PC-3 (cell line): ENCODE measurements at regions of chr3 and their contacts with region 1.

Region 1: DNA sequence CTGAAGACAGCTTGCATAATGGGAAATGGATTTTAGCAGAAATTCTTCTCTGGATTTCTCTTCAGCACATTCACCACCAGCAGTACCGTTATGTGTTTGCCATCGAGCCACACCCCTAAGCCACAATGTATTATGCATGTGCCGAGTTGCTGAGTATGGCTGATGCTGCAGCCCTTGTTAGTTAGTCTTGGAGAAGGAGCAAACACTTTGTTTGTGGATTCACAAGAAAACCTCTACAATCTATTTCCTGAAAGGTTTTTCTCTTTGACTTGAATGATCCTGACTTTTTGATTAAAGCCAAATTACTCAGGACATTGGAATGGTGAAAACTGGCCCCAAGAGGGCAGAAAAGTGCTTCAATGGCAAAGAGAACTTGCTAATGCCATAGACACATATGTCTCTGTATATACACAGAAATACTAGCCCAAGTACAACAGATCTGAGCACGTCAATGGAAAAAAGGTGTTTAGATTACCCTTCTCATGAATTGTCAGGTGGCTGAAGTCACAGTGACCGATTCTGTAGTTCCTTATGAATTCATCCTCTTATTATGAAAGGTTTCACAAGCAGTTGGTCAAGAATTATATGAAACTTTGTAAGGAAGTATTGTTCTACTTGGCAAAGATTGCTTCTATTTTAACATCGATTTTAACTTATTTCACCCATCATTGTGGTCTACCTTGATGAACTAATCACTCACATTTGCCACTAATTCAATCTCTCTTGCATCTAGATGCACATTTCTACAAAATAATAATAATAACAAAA is 103.0 kb downstream of the P3H2 start:
- DNase-seq: peak; percentile 90
- ATAC-seq: peak; percentile 74
- H3K4me3 ChIP-seq: peak overlapping the region; percentile 33; the same call in 1 of the 2 replicates
- H3K27ac ChIP-seq: no peak overlapping the region
- H3K4me1 ChIP-seq: peaks cover 28% of the 10 kb centered on the region
- H3K27me3 ChIP-seq: no peaks in the 10 kb centered on the region
- CTCF ChIP-seq: peak; percentile 86

Region 2: DNA sequence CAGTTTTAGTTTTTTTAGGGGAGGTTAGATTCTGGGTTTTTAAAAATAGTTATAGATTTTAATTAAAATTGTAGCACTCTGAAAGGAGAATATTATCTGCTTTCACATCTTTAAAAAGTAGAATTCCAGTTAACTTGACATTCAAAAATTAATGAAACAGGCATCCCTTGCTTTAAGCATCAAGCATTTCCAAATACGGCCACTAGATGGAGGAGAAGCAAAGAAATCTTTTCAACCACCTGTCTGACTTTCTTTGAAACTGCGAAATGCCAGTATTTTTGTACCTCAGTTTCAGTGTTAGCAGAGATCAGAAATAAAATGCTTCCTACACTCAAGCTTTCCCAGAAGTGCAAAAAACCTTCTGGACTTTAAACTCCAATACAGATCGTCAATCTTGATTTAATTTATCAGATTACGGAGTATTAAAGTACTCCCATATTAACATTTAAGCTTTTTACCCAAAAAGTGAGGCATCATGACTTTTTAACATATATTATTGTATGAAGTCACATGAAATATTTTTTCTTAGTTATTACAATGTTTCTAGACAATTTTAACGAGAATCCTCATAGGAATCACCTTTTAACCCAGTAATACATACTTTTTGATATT is 50.3 kb before region 1 on chr3:
- CTCF ChIA-PET with region 1: interaction called, 3 read pairs
- POLR2A ChIA-PET with region 1: no interaction called
- intact Hi-C with region 1: loop called (anchors 1 kb)
- DNase-seq: peak; percentile 85
- ATAC-seq: peak; percentile 58
- H3K4me3 ChIP-seq: no peak overlapping the region
- H3K27ac ChIP-seq: no peak overlapping the region
- H3K4me1 ChIP-seq: no peaks in the 10 kb centered on the region
- H3K27me3 ChIP-seq: no peaks in the 10 kb centered on the region
- CTCF ChIP-seq: peak; percentile 89

Region 3: GRCh38 chr3:190120269-190121060 is 102.8 kb after region 1 on chr3 and contains the start of gene P3H2:
- CTCF ChIA-PET with region 1: interaction called, 11 read pairs
- POLR2A ChIA-PET with region 1: interaction called, 3 read pairs
- intact Hi-C with region 1: loop called (anchors 1 kb)
- DNase-seq: peak; percentile 92
- ATAC-seq: peak; percentile 99
- H3K4me3 ChIP-seq: peak within 1 kb of the TSS; percentile 89
- H3K27ac ChIP-seq: no peak within 1 kb of the TSS
- H3K4me1 ChIP-seq: peaks cover 4% of the 10 kb centered on the region
- H3K27me3 ChIP-seq: no peaks in the 10 kb centered on the region
- CTCF ChIP-seq: peak; percentile 64
- total RNA-seq, gene P3H2: 4.5 and 11.4 TPM in 2 replicates

Region 4: GRCh38 chr3:190321789-190322603 is 304.3 kb after region 1 on chr3 and contains the start of gene CLDN1:
- CTCF ChIA-PET with region 1: no interaction called
- POLR2A ChIA-PET with region 1: no interaction called
- intact Hi-C with region 1: loop called (anchors 5 kb)
- DNase-seq: peak; percentile 80
- ATAC-seq: peak; percentile 92
- H3K4me3 ChIP-seq: peak within 1 kb of the TSS; percentile 69
- H3K27ac ChIP-seq: no peak within 1 kb of the TSS
- H3K4me1 ChIP-seq: peaks cover 20% of the 10 kb centered on the region
- H3K27me3 ChIP-seq: no peaks in the 10 kb centered on the region
- CTCF ChIP-seq: peak; percentile 92
- total RNA-seq, gene CLDN1: 6.8 and 9.6 TPM in 2 replicates